Posterior cingulate gyrus (tissue), 11 donors: ENCODE measurements at regions of chr4 and their contacts with region 1.

Region 1: DNA sequence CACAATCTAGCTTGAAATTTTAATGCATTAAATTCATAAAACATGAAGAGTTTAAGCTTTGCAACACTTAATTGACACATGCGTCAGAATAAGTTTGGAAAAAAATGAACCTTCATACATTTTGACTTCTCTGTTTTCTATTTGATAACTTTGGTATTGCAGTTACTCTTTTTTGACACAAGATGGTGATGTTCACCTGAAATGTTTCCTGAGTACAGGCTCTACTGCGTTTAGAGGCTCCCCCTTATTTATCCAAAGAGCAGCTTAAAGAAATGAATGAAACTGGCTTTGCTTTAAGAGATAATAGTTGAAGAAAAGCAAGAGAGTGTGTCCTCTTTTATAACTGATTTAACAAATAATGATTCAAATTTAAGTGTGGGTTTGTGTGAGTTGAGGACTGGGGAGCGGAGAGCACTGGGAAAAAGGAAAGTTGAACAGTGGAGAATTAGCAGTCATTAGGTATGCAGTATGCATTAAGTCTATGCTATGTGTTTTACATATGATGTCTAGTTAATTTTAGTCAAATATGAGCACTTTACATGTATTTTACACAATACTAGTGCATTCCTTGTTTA is 180.6 kb upstream of the NUDT6 start:
- DNase-seq: no peak

Region 2: DNA sequence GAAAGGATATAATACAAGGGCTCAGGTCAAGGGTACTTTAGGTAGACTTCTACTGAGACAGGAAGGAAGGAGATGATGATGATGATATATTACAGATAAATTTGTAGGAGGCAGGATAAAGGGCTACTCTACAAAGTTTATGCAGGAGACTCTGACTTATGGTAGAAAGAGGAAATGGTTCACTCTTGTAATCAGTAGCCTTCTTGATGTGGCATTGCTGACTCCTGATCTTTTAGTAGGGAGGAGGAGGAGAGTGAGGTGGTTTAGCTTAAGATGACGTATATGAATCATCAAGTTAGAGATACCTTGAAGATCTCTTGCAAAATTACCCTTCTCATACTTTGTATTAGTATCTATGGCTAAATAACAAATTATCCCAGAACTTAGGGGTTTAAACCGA is 946.2 kb before region 1 on chr4:
- intact Hi-C with region 1: no loop called
- DNase-seq: no peak

Region 3: DNA sequence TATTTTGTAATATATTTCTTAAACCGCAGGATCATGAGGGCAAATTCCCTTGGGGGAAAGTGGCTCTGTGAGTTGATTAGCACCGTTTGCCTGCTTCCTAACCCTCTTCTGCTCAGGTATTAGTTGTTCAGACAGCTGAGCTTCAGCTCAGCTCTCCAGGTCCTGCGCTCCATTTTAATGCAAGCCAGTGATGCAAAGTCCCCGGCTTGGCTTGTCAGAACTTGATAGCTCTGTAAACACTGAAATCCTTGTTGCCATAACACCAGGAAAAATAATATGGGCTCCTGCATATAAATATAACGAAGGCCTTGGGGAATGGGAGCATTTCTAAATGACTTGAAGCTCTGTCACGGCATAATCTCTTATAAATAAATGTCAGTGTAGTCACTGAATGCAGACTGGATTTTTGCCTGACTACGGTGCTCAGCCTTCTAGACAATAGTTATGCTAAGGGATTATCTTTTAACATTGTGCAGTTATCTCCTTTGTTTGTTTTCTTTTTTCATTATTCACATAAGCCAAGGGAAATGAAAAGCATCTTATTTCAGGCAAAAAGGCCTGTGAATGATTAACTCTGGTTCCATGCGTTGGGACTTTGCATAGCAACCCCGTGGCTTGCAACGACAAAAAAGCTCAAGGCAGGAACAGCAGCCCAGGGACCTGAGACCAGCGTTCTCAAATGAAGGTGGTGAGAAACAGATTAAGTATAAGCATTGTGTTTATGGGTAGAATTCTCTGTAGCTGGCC is 546.8 kb after region 1 on chr4:
- intact Hi-C with region 1: loop called (anchors 10 kb)
- DNase-seq: peak in 1 of 10 donors; percentile 2